Activated T-helper 1 cell treated with anti-CD3 and anti-CD28 coated beads, Interleukin-12 subunit alpha, Interleukin-12 subunit beta, Interleukin-2, Interleukin-4 antibody, amounts not matched to agents 30 ng/mL and 10 ng/mL and 1 ng/mL, durations not matched to agents 14 hours and 24 hours and 36 hours (primary cell): ENCODE measurements at regions of chr7 and their contacts with region 1.

Region 1: GRCh38 chr7:130996841-130997231 is 262.8 kb upstream of the KLF14 start:
- DNase-seq: no peak
- H3K4me3 Mint-ChIP-seq: peak overlapping the region; percentile 50
- H3K27ac Mint-ChIP-seq: peak overlapping the region; percentile 84
- H3K4me1 Mint-ChIP-seq: peaks cover 59% of the 10 kb centered on the region
- H3K27me3 Mint-ChIP-seq: no peaks in the 10 kb centered on the region

Region 2: GRCh38 chr7:130505753-130506152 is 491.1 kb before region 1 on chr7:
- intact Hi-C with region 1: no loop called
- DNase-seq: no peak
- H3K4me3 Mint-ChIP-seq: no peak overlapping the region
- H3K27ac Mint-ChIP-seq: no peak overlapping the region
- H3K4me1 Mint-ChIP-seq: no peaks in the 10 kb centered on the region
- H3K27me3 Mint-ChIP-seq: no peaks in the 10 kb centered on the region

Region 3: DNA sequence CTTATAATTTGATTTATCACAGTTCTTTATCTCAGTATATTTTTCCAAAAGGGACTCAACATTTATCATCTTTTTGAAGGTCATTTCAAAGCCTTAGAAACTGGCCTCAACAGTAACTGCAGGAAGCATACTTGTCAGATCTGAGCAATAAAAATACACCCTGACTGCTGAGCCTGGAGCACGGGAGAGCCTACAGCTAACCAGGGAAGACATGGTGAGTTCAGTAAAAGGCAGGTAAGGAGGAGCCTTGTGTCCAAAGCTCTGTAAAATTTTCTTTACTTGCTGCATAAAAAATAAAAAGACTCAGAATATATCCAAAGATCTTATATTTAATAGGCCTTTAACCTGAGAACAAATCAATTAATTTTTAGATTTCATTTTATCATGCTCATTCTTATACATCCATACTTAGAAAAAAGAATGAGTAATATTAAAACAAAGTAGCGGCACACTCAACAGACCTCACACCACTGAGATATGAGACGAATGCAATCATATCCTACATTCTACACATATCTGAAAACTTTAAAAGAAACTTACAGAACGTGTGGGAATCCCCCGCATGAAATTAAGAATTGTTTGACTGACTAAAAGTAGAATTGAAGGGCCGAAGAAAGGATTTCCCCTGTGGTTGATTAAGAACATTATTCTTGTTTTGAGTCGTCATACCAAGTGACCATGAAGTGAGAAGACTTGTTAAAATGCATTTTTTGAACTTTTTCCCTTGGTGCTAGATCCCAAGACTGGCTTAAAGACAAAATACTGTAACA is 34.4 kb after region 1 on chr7:
- intact Hi-C with region 1: loop called (anchors 5 kb)
- DNase-seq: no peak
- H3K4me3 Mint-ChIP-seq: peak overlapping the region; percentile 42
- H3K27ac Mint-ChIP-seq: peak overlapping the region; percentile 81
- H3K4me1 Mint-ChIP-seq: peaks cover 79% of the 10 kb centered on the region
- H3K27me3 Mint-ChIP-seq: no peaks in the 10 kb centered on the region

Region 4: DNA sequence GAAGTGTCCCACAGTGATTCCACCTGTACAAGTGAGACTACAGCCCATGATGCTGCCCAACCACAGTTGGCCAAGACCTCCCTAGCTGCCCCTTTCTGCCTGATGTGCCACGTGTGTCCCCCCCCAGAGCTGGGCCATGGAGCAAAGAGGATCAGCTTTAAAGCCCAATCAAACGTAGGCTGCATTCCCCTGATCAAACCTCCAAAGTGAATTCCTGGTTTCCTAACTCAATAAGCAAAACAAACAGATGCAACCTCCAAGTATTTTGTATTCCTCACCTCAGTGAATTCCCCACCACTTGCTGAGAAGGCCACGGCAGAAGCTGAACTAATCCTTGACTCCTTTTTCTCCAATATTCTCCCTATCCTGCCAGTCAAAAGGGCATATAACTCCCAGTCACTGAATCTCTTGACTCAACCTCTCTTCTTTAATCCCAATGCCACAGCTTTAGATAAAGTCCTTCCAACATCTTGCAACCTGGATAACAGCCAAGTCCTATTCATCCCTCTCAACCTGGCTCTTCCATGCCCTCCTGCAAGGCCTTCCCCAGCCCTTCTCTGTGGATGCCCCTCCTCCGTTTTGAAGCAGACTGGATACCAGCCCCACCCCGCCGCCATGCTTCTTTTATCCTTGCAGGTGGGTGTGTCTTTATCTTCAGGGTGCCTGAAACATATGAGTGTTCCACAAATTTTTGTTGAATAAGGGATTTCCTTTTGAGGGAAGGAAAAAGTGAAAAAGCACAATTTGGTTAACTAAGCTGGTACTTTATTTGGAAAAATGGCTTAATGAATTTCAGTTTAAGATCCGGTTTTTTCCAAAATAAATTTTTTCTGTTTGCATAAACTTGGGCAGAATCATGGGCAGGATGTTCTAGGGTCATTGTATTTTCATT is 45.7 kb after region 1 on chr7:
- intact Hi-C with region 1: no loop called
- DNase-seq: no peak
- H3K4me3 Mint-ChIP-seq: no peak overlapping the region
- H3K27ac Mint-ChIP-seq: no peak overlapping the region
- H3K4me1 Mint-ChIP-seq: peaks cover 27% of the 10 kb centered on the region
- H3K27me3 Mint-ChIP-seq: no peaks in the 10 kb centered on the region